ENCODE measurements at regions of chr17 and their contacts with region 1.

Region 1: DNA sequence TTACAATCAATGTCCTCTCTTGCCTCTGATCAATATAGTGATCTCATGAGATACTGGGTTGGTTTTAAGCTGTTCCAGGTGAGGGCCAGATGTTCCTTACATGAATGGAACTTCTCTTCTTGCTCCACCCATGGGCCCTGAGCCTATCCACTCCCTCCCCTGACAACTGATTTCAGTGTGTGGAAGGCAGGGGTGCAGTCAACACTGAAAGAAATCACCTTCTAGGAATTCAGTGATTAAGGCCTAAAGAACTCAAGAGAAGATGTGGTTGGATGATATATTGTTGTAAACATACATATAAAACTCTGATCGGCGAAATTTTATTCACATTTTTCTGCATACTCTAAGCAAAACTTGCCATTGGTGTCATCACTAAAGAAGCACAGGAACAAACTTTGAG is 6.7 kb upstream of the GOSR2 start:
- DNase-seq: no peak
- ATAC-seq: no peak
- H3K4me3 ChIP-seq: no peak overlapping the region
- H3K27ac ChIP-seq: no peak overlapping the region
- H3K4me1 ChIP-seq: no peaks in the 10 kb centered on the region
- H3K27me3 ChIP-seq: no peaks in the 10 kb centered on the region

Region 2: DNA sequence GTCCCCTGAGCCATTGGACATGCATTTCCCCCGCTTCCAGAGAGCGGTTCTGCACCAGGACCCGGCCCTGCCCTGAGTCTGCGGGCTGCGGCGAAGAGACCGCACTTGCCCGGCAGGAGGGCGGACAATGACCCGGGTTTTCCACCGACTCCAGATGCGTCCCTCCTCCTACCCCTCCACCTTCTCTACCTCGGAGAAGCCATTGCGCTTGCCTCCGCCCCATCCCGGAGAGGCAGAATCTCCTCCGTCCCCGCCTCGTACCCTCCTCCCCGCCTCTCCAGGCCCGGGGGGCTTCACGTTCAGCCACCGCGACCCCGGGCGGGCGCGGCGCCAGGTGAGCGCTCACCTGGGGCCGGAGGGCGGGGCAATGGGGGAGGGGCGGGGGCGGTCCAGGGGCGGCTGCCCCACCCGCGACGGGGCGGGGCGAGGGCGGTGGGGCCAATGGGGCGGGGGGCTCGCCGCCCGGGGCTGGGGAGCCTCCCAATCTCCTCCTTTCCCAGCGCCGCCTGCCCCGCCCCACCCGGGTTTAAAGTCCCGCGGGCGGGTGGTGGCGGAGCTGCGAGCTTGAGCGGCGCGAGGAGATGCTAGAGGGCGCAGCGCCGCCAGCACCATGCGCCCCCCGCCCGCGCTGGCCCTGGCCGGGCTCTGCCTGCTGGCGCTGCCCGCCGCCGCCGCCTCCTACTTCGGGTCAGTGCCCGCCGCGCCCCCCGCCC is 65.0 kb before region 1 on chr17 and contains the start of gene WNT9B:
- intact Hi-C with region 1: loop called in 1 of 4 experiments (anchors 5 kb)
- DNase-seq: peak; percentile 65 to 71 (median 67)
- ATAC-seq: peak; percentile 67 to 76
- H3K4me3 ChIP-seq: peak within 1 kb of the TSS; percentile 33
- H3K27ac ChIP-seq: no peak within 1 kb of the TSS
- H3K4me1 ChIP-seq: no peaks in the 10 kb centered on the region
- H3K27me3 ChIP-seq: no peaks in the 10 kb centered on the region
- total RNA-seq, gene WNT9B: 2.4 to 20.7 (median 3.4) TPM

Region 3: DNA sequence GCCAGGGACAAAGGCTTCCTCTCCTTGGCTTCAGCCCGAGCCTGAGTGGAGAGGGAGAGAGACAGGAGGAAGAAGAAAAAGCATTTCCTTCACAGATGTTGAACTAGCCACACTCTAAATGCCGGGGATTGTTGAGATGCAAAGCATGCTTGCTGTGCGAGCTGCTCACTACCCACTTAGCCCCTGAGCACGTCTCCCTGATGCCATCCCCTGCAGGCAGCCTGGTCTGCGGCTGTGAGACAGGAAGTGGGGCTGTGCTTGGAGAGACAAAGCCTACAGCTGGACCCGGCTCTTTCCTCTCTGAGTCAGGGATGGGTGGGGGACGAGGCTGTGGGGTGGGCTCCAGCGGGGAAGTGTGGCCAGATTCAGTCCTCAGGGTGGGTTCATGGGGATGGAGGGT is 51.1 kb before region 1 on chr17:
- intact Hi-C with region 1: loop called in 1 of 4 experiments (anchors 5 kb)
- DNase-seq: no peak
- ATAC-seq: no peak
- H3K4me3 ChIP-seq: no peak overlapping the region
- H3K27ac ChIP-seq: no peak overlapping the region
- H3K4me1 ChIP-seq: no peaks in the 10 kb centered on the region
- H3K27me3 ChIP-seq: no peaks in the 10 kb centered on the region

Region 4: DNA sequence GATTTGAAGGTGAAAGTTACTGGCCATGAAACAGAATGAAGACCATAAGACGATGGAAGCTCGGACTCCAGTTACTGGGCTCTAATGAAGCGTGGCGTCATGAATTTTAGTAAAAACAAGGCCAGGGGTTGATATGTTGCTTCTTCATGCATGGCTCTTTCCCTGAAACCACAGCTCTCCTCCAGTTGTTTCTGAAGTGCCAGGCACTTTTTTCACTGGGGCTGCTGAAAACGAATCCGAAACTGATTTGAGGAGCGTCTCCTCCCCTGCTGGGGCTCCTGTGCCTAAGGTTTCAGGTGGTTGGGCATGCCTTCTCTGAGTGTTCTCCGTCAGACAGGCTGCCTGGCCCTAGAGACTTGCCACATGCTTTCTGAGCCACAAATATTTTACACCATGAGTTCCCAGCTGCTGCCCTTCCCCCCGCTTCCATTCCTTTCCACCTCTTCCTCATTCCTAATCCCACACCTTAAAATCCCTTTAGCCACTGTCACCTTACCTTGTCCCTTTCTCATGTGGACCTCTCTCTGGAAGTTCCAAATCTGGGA is 289.3 kb after region 1 on chr17:
- intact Hi-C with region 1: no loop called
- DNase-seq: peak in 2 of 3 donors; percentile 31 to 73
- ATAC-seq: peak; percentile 40 to 53
- H3K4me3 ChIP-seq: no peak overlapping the region
- H3K27ac ChIP-seq: peak overlapping the region; percentile 93
- H3K4me1 ChIP-seq: peaks cover 12% of the 10 kb centered on the region
- H3K27me3 ChIP-seq: no peaks in the 10 kb centered on the region

Region 5: DNA sequence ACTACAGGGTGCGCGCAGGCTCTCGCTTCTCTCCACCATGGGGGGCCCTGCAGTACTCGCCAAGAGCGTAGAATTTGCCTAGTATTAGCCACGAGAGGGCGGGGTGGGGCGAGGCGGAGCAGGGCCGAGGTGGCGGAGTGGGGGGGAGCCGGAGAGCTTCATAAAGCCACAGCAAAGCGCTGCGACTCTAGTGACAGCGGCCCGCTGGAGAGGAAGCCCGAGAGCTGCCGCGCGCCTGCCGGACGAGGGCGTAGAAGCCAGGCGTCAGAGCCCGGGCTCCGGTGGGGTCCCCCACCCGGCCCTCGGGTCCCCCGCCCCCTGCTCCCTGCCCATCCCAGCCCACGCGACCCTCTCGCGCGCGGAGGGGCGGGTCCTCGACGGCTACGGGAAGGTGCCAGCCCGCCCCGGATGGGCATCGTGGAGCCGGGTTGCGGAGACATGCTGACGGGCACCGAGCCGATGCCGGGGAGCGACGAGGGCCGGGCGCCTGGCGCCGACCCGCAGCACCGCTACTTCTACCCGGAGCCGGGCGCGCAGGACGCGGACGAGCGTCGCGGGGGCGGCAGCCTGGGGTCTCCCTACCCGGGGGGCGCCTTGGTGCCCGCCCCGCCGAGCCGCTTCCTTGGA is 816.9 kb after region 1 on chr17 and contains the start of gene TBX21:
- intact Hi-C with region 1: no loop called
- DNase-seq: peak; percentile 65 to 87 (median 86)
- ATAC-seq: peak; percentile 76 to 80
- H3K4me3 ChIP-seq: peak within 1 kb of the TSS; percentile 58
- H3K27ac ChIP-seq: no peak within 1 kb of the TSS
- H3K4me1 ChIP-seq: no peaks in the 10 kb centered on the region
- H3K27me3 ChIP-seq: no peaks in the 10 kb centered on the region
- total RNA-seq, gene TBX21: 0.14 to 0.60 (median 0.38) TPM in 3 of 4 donors, not detected in the other

Measured in right cardiac atrium (tissue), 5 donors.